Mammary epithelial cell (primary cell): ENCODE measurements at regions of chr1 and their contacts with region 1.

Region 1: DNA sequence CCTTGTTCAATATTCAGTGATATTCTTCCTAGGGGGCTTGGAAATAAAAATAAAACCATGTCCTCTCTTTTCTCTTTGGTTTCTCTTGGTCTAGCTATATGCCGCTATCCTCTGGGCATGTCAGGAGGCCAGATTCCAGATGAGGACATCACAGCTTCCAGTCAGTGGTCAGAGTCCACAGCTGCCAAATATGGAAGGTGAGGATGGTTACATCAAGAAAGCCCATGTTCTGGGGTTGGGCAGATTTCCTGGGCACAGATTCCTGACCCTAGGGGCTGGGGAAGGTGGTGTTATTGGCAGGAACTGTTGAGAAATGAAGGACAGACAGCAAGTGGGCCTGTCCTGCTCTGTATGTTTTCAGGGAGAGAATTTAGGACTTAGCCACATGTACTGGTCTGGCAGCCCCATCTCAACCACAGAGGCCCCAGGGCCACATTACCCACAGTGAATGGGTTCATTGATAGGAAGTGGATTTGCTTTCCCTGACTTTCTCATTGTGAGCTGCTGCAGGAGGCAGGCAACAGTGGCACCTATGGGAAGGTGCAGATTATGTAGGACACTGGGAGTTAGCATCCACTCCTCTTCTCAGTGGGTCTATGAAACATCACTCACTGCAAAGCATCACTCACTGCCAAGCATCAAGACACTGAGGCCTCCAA is 37.4 kb upstream of the HSD17B7 start:
- DNase-seq: peak; percentile 9
- H3K4me3 ChIP-seq: no peak overlapping the region
- H3K27ac ChIP-seq: no peak overlapping the region
- H3K4me1 ChIP-seq: peaks cover 7% of the 10 kb centered on the region
- H3K27me3 ChIP-seq: no peaks in the 10 kb centered on the region
- CTCF ChIP-seq: peak in 1 of 2 donors; percentile 32

Region 2: DNA sequence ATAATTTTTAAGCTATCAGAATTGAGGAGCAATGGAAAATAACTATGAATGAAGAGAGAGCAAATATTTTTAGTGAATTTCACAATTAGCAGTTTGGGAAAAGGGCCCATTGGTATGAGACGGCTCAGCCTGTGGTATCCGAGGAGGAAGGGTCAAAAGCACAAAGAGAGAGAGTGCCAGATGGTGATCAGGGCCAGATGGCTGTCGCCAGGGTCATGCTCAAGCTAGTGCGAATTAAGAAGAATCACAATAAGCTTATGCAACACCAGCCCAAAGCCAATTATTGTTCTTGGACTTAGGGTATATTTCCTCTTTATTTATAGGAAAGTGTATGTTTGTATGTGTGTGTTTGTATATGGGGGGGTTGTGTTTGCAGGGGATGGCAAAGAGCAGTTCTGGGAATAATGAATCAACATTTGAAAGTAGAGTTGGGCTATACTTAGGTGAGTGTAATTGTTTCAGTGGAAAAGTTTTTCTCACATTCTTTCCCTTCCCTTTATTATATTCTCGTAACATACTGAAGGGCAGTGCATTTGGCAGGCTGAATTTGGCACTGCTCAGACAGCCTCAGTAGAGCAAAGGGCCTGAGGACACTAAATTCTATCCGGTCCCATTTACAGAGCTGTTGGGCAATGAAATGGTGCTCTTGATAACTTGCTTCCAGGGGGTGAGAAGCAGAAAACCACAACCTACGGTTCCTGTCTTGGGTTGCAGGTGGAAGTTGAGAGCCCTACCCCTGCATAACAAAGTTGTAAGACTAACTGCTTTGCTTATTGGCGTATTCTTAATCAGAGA is 140.3 kb before region 1 on chr1:
- CTCF ChIA-PET with region 1: no interaction called
- dilution Hi-C with region 1: no loop called
- in situ Hi-C with region 1: no loop called
- intact Hi-C with region 1: loop called (anchors 1 kb)
- DNase-seq: no peak
- H3K4me3 ChIP-seq: no peak overlapping the region
- H3K27ac ChIP-seq: no peak overlapping the region
- H3K4me1 ChIP-seq: no peaks in the 10 kb centered on the region
- H3K27me3 ChIP-seq: no peaks in the 10 kb centered on the region
- CTCF ChIP-seq: no peak